ENCODE measurements at regions of chr1 and their contacts with region 1.

Region 1: DNA sequence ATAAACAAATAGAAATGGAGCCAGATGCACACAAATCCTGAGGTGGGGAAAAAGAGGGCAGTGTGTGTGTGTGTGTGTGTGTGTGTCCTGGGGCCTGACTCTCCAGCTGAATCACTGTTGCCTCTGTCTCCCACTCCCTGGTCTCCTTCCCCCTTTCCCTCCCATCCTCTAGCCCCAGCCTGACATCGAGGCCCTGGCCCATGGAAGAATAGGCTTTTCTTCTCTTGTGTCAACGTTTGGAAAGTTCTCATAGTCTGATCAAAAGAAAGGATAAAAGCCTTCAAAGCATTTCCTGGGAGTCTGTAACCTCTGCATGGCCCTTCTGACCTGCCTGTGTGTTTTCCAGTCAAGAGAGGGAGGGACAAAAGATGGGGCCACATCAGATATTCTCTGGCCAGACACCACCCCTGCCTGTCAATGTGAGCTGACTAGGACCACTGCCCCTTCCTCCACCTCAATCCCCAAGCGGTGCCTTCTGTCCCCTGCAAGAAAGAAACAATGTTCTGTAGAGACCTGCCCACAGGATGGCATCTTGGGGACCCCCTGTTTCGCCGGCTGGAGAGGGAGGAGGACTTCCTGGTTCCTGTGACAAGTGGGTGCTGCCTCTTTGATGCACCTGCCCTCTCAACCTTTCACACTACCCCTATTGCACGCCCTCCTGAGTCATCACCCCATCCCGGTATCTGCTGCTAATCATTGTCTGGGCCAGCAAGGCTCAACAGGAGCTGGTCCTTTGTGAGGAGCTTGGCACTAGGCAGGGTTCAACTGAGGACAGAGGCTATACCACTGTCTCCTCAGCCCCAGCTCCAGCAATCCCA is 16.2 kb downstream of the KCNJ10 start:
- DNase-seq: peak; percentile 99
- ATAC-seq: peak; percentile 94
- H3K4me3 ChIP-seq: peak overlapping the region; percentile 4 to 56 (median 14); a peak in 2 of 6 replicates
- H3K27ac ChIP-seq: peak overlapping the region; percentile 83
- H3K4me1 ChIP-seq: peaks cover 95% of the 10 kb centered on the region
- H3K27me3 ChIP-seq: no peaks in the 10 kb centered on the region
- CTCF ChIP-seq: 0 out of 2 replicates have a peak, but pooled peaks have one; percentile 4
- EP300 ChIP-seq: peak; percentile 3 to 95; a peak in 2 of 4 replicates
- POLR2A ChIP-seq: no peak
- RAD21 ChIP-seq: no peak

Region 2: DNA sequence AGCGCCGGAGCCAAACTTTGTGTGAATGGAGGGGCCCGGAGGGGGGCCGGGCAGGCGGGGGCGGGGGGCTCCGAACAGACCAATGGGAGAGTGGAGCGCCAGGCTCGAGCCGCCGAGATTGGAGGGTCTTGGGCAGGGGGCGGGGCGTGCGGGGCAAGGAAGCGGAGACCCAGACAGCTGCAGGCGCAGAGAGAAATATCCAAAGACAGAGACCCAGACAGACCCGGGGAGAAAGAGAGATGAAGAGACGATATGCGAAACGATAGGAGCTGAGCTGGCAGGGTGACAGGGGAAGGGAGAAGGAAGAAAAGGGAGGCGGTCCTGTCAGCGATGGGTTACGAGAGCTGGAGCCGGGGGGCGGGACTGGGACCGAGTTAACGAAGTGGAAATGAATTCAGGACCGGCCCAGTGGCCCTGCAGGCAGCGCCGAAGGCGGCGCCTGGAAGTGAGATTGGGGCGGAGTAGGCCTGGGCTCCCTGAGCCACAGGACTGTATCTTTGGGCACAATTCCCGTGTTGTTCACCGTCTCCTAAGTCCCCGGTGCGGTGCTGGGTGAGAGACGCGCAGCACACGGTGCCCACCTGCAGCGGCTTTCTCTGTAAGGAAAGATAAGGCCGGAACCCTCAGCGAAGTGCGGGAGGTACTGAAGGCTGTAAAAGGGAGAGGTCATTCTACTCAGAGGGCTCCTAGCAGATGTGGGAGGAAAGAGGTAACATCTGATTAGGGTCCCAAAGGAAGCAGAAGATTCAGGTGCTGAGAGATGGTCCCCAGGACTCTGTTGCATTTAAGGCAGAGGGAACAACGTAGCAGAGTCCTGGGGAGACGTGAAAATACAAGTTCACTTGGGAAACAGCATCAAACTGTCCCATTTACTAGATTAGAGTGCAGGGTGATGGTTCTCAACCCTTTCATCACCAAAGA is 16.7 kb after region 1 on chr1:
- CTCF ChIA-PET with region 1: no interaction called
- POLR2A ChIA-PET with region 1: interaction called, 25 read pairs
- in situ Hi-C with region 1: no loop called
- intact Hi-C with region 1: loop called (anchors 1 kb)
- DNase-seq: peak; percentile 81
- ATAC-seq: peak; percentile 95
- H3K4me3 ChIP-seq: peak overlapping the region; percentile 80 to 87 (median 83)
- H3K27ac ChIP-seq: peak overlapping the region; percentile 39
- H3K4me1 ChIP-seq: peaks cover 83% of the 10 kb centered on the region
- H3K27me3 ChIP-seq: no peaks in the 10 kb centered on the region; a peak in 1 of 5 replicates
- CTCF ChIP-seq: no peak
- EP300 ChIP-seq: no peak
- POLR2A ChIP-seq: peak in 1 of 2 experiments; percentile 46; a peak in 1 of 4 replicates
- RAD21 ChIP-seq: no peak

Region 3: GRCh38 chr1:160090760-160091159 is 37.0 kb after region 1 on chr1:
- CTCF ChIA-PET with region 1: no interaction called
- POLR2A ChIA-PET with region 1: no interaction called
- in situ Hi-C with region 1: no loop called
- intact Hi-C with region 1: no loop called
- DNase-seq: no peak
- ATAC-seq: no peak
- H3K4me3 ChIP-seq: no peak overlapping the region
- H3K27ac ChIP-seq: no peak overlapping the region
- H3K4me1 ChIP-seq: peaks cover 23% of the 10 kb centered on the region
- H3K27me3 ChIP-seq: no peaks in the 10 kb centered on the region
- CTCF ChIP-seq: no peak
- EP300 ChIP-seq: no peak
- POLR2A ChIP-seq: no peak
- RAD21 ChIP-seq: no peak

Measured in HepG2 (cell line).